Activated B cell treated with CpG ODN at 0.5 μM for 24 hours (primary cell): ENCODE measurements at regions of chr9 and their contacts with region 1.

Region 1: DNA sequence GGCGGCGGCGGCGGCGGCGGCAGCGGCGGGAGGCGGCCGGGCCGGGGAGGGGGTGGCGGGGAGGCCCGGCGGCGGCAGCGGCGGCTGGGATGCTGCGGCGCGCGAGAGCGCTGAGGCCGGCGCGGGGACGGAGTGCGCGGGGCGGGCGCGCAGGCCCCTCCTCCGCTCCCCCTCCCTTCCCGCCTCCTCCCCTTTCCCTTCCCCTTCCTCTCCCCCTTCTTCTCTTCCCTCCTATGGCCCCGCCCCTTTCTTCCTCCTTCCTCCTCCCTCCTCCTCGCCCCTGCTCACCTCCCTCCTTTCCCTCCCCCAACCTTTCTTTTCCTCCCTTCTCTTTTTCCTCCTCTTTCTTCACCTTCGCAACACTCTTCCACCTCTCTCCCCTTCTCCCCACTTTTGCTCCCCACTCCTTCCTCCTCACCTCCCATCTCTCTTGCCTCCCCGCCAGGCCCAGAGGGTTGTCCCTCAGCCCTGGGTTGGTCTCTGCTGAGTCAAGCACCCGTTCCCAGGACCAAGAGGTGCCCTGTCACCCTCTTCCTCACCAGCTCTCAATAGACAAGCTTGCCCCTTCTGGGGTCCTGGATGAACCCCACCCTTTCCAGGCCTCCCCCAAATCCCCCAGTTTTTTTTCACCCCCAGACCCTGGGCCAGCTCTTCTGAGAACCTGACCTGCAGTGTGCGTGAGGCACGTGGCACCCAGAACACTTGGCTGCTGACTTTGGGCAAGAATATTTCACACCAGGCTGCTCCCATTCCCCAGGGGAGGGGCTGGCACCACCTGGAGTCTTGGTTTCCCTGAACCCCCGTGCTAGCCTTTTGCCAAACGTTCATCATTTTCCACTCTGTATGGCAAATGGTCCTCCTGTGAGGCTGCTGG is at the start of gene SEMA4D:
- DNase-seq: peak; percentile 29
- ATAC-seq: peak; percentile 49
- H3K4me3 Mint-ChIP-seq: peak within 1 kb of the TSS; percentile 92
- H3K27ac Mint-ChIP-seq: peak within 1 kb of the TSS; percentile 91
- H3K4me1 Mint-ChIP-seq: peaks cover 79% of the 10 kb centered on the region
- H3K27me3 Mint-ChIP-seq: no peaks in the 10 kb centered on the region
- CTCF ChIP-seq: no peak
- total RNA-seq, gene SEMA4D: 68.0 and 79.7 TPM in 2 replicates

Region 2: GRCh38 chr9:89464300-89464901 is 33.8 kb before region 1 on chr9:
- CTCF ChIA-PET with region 1: no interaction called
- POLR2A ChIA-PET with region 1: interaction called, 4 read pairs
- intact Hi-C with region 1: loop called (anchors 1 kb)
- DNase-seq: peak; percentile 23
- ATAC-seq: peak; percentile 49
- H3K4me3 Mint-ChIP-seq: peak overlapping the region; percentile 72
- H3K27ac Mint-ChIP-seq: peak overlapping the region; percentile 80
- H3K4me1 Mint-ChIP-seq: peaks cover 90% of the 10 kb centered on the region
- H3K27me3 Mint-ChIP-seq: no peaks in the 10 kb centered on the region
- CTCF ChIP-seq: no peak

Region 3: DNA sequence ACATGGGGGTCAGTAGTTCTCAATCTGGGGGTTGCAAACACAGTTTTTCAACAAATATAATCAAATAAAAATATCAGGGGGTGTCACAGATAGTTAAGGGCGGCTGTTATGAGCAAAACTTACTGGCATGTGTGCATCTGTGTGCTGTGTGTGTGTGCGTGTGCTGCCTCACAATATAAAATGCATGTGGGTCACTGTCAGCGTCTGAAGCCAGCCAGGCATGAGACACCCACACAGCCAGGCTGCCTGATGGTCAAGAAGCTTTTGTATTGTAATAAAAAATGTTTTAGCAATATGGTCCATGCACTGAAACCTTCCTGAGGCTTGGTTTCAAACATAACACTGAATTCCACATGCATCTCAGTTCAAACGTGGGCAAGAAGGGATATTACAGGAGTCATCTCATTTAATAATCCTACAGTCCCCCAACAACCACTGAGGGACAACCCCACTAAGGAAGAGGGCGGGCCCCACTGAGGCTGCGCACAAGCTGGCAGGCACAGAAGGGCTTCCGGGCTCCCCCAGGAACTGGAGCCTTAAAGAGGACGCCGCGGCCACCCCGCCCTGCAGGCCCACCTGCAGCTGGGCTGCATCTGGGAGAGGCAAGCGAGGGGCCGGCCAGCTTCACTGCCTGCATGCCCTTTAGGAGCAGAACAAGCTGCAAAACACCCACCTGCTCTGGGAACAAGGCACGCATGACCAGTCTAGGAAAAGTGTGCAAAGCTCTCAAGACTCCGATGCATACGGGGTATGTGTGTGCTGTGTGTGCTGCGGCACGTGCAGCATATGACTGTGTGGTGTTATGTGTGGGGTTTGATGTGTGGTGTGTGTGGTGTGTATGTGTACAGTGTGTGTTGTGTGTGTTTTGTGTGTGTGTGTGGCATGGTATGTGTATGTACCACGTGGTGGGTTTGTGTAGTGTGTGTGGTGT is 14.4 kb before region 1 on chr9:
- CTCF ChIA-PET with region 1: interaction called, 4 read pairs
- POLR2A ChIA-PET with region 1: interaction called, 15 read pairs
- intact Hi-C with region 1: no loop called
- DNase-seq: peak; percentile 52
- ATAC-seq: peak; percentile 82
- H3K4me3 Mint-ChIP-seq: peak overlapping the region; percentile 80
- H3K27ac Mint-ChIP-seq: peak overlapping the region; percentile 79
- H3K4me1 Mint-ChIP-seq: peaks cover 79% of the 10 kb centered on the region
- H3K27me3 Mint-ChIP-seq: no peaks in the 10 kb centered on the region
- CTCF ChIP-seq: no peak